Lower leg skin (tissue), 4 donors: ENCODE measurements at regions of chr4 and their contacts with region 1.

Region 1: GRCh38 chr4:123503698-123504363 is 107.2 kb downstream of the SPRY1 start:
- DNase-seq: peak in 1 of 2 donors; percentile 27
- H3K4me3 ChIP-seq: no peak overlapping the region
- CTCF ChIP-seq: no peak
- POLR2A ChIP-seq: no peak

Region 2: DNA sequence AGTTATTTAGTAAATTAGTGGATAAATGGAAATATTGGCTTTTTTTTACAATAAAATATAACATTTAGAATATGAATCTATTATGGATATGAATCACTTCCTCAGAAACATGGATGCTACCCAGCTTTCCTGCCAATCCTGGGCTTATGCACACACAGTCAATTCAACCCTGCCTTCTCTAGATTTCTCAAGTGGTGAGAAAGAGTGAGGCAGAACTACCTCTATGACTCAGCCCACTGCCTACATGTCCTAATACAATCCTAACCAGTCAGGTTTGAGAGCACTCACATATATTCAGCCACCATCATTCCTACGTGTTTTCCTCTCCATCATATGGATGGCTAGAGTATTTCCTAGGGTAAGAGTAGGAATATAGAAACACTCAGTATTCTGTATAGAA is 1299.8 kb after region 1 on chr4:
- intact Hi-C with region 1: loop called (anchors 5 kb)
- DNase-seq: no peak
- H3K4me3 ChIP-seq: no peak overlapping the region
- CTCF ChIP-seq: no peak
- POLR2A ChIP-seq: no peak